CD4-positive, alpha-beta memory T cell (primary cell): ENCODE measurements at regions of chr2 and their contacts with region 1.

Region 1: GRCh38 chr2:98731041-98731893 is at the start of gene MGAT4A:
- DNase-seq: peak; percentile 77 to 86 (median 82)
- H3K4me3 ChIP-seq: peak within 1 kb of the TSS; percentile 67 to 86
- H3K4me3 Mint-ChIP-seq: peak within 1 kb of the TSS; percentile 94 to 97 (median 94)
- H3K27ac ChIP-seq: peak within 1 kb of the TSS; percentile 95
- H3K27ac Mint-ChIP-seq: peak within 1 kb of the TSS; percentile 94 to 98 (median 96)
- H3K4me1 ChIP-seq: peaks cover 72% of the 10 kb centered on the region
- H3K4me1 Mint-ChIP-seq: peaks cover 44 to 80% (median 53%) of the 10 kb centered on the region in 4 donors
- H3K27me3 ChIP-seq: no peaks in the 10 kb centered on the region
- H3K27me3 Mint-ChIP-seq: no peaks in the 10 kb centered on the region
- total RNA-seq, gene MGAT4A: 256 to 270 TPM

Region 2: GRCh38 chr2:98524168-98524567 is 207.1 kb before region 1 on chr2:
- CTCF ChIA-PET with region 1: no interaction called
- POLR2A ChIA-PET with region 1: no interaction called
- intact Hi-C with region 1: no loop called
- DNase-seq: no peak
- H3K4me3 ChIP-seq: no peak overlapping the region
- H3K4me3 Mint-ChIP-seq: no peak overlapping the region
- H3K27ac ChIP-seq: no peak overlapping the region
- H3K27ac Mint-ChIP-seq: peak overlapping the region in 1 of 7 donors; percentile 18
- H3K4me1 ChIP-seq: no peaks in the 10 kb centered on the region
- H3K4me1 Mint-ChIP-seq: peaks cover 7 to 12% (median 11%) of the 10 kb centered on the region in 4 donors
- H3K27me3 ChIP-seq: no peaks in the 10 kb centered on the region
- H3K27me3 Mint-ChIP-seq: no peaks in the 10 kb centered on the region

Region 3: DNA sequence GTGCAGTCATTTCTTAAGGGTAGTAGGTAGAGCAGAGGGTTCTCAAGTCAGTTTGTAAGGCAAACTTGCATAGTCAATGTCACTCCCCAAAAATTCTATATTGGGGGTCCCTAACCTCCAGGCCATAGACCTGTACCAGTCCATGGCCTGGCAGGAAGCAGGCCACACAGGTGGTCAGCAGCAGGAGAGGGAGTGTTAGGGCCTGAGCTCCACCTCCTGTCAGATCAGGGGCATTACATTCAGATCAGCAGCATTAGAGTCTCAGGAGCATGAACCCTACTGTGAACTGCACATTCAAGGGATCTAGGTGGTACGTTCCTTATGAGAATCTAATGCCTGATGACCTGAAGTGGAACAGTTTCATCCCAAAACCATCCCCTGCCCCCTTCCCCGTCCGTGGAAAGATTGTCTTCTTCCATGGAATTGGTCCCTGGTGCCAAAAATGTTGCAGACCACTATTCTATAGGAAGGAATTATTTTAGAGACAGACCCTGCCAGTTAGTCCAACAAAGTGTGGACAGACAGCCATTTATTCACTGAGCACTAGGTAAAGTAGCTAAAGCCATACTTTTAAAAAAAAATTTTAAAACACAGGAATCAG is 129.6 kb before region 1 on chr2:
- CTCF ChIA-PET with region 1: no interaction called
- POLR2A ChIA-PET with region 1: no interaction called
- intact Hi-C with region 1: no loop called
- DNase-seq: no peak
- H3K4me3 ChIP-seq: no peak overlapping the region
- H3K4me3 Mint-ChIP-seq: no peak overlapping the region
- H3K27ac ChIP-seq: no peak overlapping the region
- H3K27ac Mint-ChIP-seq: peak overlapping the region in 5 of 7 donors; percentile 55 to 77 (median 75)
- H3K4me1 ChIP-seq: peaks cover 21% of the 10 kb centered on the region
- H3K4me1 Mint-ChIP-seq: peaks cover 24 to 35% (median 27%) of the 10 kb centered on the region in 4 donors
- H3K27me3 ChIP-seq: no peaks in the 10 kb centered on the region
- H3K27me3 Mint-ChIP-seq: no peaks in the 10 kb centered on the region

Region 4: GRCh38 chr2:98649135-98649991 is 81.9 kb before region 1 on chr2:
- CTCF ChIA-PET with region 1: interaction called, 18 read pairs
- POLR2A ChIA-PET with region 1: interaction called, 292 read pairs
- intact Hi-C with region 1: no loop called
- DNase-seq: peak; percentile 79 to 85 (median 81)
- H3K4me3 ChIP-seq: no peak overlapping the region
- H3K4me3 Mint-ChIP-seq: peak overlapping the region in 5 of 8 donors; percentile 10 to 73 (median 33)
- H3K27ac ChIP-seq: peak overlapping the region; percentile 10
- H3K27ac Mint-ChIP-seq: peak overlapping the region; percentile 66 to 89 (median 84)
- H3K4me1 ChIP-seq: peaks cover 52% of the 10 kb centered on the region
- H3K4me1 Mint-ChIP-seq: peaks cover 45 to 60% (median 54%) of the 10 kb centered on the region in 4 donors
- H3K27me3 ChIP-seq: no peaks in the 10 kb centered on the region
- H3K27me3 Mint-ChIP-seq: no peaks in the 10 kb centered on the region

Region 5: DNA sequence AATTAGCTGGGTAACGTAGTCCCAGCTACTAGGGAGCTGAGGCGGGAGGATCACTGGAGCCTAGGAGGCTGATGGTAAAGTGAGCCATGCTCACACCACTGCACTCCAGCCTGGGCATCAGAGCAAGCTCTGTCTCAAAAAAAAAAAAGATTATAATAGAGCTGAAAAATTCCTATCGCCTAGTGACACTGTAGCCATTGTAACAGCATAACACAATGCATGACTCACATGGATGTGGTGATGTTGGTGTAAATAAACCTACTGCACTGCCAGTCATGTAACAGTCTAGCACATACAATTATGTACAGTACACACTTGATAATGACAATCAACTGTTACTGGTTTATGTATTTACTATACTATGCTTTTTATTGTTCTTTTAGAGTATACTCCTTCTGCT is 40.0 kb before region 1 on chr2:
- CTCF ChIA-PET with region 1: no interaction called
- POLR2A ChIA-PET with region 1: interaction called, 10 read pairs
- intact Hi-C with region 1: loop called (anchors 5 kb)
- DNase-seq: peak in 1 of 5 donors; percentile 57
- H3K4me3 ChIP-seq: no peak overlapping the region
- H3K4me3 Mint-ChIP-seq: peak overlapping the region in 6 of 8 donors; percentile 21 to 60 (median 35)
- H3K27ac ChIP-seq: peak overlapping the region; percentile 8
- H3K27ac Mint-ChIP-seq: peak overlapping the region; percentile 36 to 94 (median 76)
- H3K4me1 ChIP-seq: peaks cover 97% of the 10 kb centered on the region
- H3K4me1 Mint-ChIP-seq: peaks cover 68 to 94% (median 81%) of the 10 kb centered on the region in 4 donors
- H3K27me3 ChIP-seq: no peaks in the 10 kb centered on the region
- H3K27me3 Mint-ChIP-seq: no peaks in the 10 kb centered on the region

Region 6: DNA sequence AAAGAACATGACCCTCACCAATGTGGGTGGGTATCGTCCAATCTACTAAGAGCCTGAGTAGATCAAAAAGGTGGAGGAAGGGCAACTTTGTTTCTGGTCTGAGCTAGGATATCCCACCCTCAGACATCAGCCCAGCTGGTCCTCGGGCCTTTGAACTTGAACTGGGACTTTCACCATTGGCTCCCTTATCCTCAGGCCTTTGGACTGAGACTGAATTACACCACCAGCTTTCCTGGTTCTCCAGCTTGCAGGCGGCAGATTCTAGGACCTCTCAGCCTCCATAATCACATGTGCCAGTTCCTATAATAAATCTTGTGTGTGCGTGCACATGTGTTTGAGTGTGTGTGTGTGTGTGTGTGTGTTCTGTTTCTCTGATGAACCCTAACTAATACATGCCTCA is 11.0 kb before region 1 on chr2:
- CTCF ChIA-PET with region 1: interaction called, 14 read pairs
- POLR2A ChIA-PET with region 1: interaction called, 34 read pairs
- intact Hi-C with region 1: loop called (anchors 1 kb)
- DNase-seq: no peak
- H3K4me3 ChIP-seq: no peak overlapping the region
- H3K4me3 Mint-ChIP-seq: peak overlapping the region in 4 of 8 donors; percentile 2 to 56 (median 36)
- H3K27ac ChIP-seq: peak overlapping the region; percentile 4
- H3K27ac Mint-ChIP-seq: peak overlapping the region in 6 of 7 donors; percentile 18 to 92 (median 76)
- H3K4me1 ChIP-seq: peaks cover 92% of the 10 kb centered on the region
- H3K4me1 Mint-ChIP-seq: peaks cover 73 to 91% (median 80%) of the 10 kb centered on the region in 4 donors
- H3K27me3 ChIP-seq: no peaks in the 10 kb centered on the region
- H3K27me3 Mint-ChIP-seq: no peaks in the 10 kb centered on the region

Region 7: DNA sequence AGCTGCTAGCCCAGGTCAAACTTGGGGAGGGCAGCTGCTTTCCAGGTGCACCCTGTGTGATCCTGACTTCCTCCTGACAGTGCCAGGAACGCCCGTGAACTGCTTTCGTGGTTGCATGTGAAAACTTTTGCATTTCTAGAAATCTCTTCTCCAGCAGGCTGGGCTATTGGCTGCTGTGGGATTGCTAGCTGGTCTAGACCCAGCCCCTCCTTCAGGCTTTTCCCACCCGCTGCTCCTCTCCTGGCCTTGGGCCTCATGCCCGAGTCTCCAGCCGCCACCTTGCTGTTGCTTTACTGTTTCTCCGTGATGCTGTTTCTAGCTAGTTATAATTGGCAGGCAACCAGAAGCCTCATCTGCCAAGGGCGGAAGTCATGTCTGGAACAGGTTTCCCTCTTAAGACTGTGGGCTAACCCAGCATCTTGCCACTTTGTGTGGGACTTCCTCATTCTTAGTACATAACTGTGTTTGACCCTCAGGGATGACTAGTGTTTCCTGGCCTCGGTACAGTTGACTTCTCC is 26.7 kb after region 1 on chr2:
- CTCF ChIA-PET with region 1: interaction called, 24 read pairs
- POLR2A ChIA-PET with region 1: interaction called, 565 read pairs
- intact Hi-C with region 1: loop called (anchors 1 kb)
- DNase-seq: peak; percentile 68 to 87 (median 71)
- H3K4me3 ChIP-seq: peak overlapping the region in 1 of 2 donors; percentile 37
- H3K4me3 Mint-ChIP-seq: peak overlapping the region; percentile 68 to 95 (median 84)
- H3K27ac ChIP-seq: peak overlapping the region; percentile 68
- H3K27ac Mint-ChIP-seq: peak overlapping the region; percentile 93 to 99 (median 97)
- H3K4me1 ChIP-seq: peaks cover 69% of the 10 kb centered on the region
- H3K4me1 Mint-ChIP-seq: peaks cover 57 to 86% (median 71%) of the 10 kb centered on the region in 4 donors
- H3K27me3 ChIP-seq: no peaks in the 10 kb centered on the region
- H3K27me3 Mint-ChIP-seq: no peaks in the 10 kb centered on the region

Region 8: GRCh38 chr2:98835831-98836385 is 104.6 kb after region 1 on chr2:
- CTCF ChIA-PET with region 1: interaction called, 5 read pairs
- POLR2A ChIA-PET with region 1: interaction called, 209 read pairs
- intact Hi-C with region 1: loop called (anchors 1 kb)
- DNase-seq: peak; percentile 66 to 88 (median 79)
- H3K4me3 ChIP-seq: peak overlapping the region in 1 of 2 donors; percentile 22
- H3K4me3 Mint-ChIP-seq: peak overlapping the region; percentile 43 to 77 (median 64)
- H3K27ac ChIP-seq: peak overlapping the region; percentile 54
- H3K27ac Mint-ChIP-seq: peak overlapping the region; percentile 88 to 99 (median 97)
- H3K4me1 ChIP-seq: peaks cover 40% of the 10 kb centered on the region
- H3K4me1 Mint-ChIP-seq: peaks cover 36 to 53% (median 44%) of the 10 kb centered on the region in 4 donors
- H3K27me3 ChIP-seq: no peaks in the 10 kb centered on the region
- H3K27me3 Mint-ChIP-seq: no peaks in the 10 kb centered on the region

Region 9: DNA sequence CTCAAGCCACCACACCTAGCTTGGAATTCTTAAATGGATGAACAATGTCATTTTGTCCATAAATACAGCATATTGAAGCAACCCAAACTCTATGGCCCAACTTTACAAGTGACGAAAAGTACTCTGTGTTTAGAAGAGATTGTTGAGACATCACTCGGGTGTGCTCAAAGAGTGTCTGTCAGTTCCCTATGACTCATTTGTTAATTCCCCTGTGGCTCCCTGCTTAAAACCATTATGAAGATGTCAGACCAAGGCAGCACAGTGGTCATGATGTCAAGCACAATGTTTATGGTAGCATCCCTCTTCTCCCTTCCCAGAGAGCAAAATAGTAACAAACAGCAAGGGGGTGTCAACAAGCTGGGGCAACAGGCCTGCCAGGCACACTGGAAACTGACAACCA is 566.7 kb after region 1 on chr2:
- CTCF ChIA-PET with region 1: no interaction called
- POLR2A ChIA-PET with region 1: no interaction called
- intact Hi-C with region 1: no loop called
- DNase-seq: no peak
- H3K4me3 ChIP-seq: no peak overlapping the region
- H3K4me3 Mint-ChIP-seq: no peak overlapping the region
- H3K27ac ChIP-seq: no peak overlapping the region
- H3K27ac Mint-ChIP-seq: no peak overlapping the region
- H3K4me1 ChIP-seq: no peaks in the 10 kb centered on the region
- H3K4me1 Mint-ChIP-seq: no peaks in the 10 kb centered on the region
- H3K27me3 ChIP-seq: no peaks in the 10 kb centered on the region
- H3K27me3 Mint-ChIP-seq: no peaks in the 10 kb centered on the region

Region 10: DNA sequence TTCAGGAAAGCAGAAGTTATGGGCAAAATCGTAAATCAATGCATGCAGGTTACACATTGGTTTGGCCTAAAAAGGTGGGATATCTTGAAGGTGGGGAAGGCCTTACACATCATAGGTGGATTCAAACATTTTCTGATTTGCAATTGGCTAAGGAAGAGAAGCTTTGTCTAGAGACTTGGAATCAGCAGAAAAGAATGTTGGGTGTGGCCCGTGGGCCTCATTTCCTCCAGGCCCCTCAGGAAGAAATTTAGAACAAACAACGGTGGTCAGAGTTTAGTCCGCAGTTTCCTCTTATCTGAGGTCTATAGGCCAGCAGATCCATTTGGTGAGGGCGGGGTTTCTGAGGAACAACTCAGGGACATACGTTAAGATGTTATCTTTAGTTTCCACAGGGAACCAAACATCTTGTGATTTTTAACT is 1462.0 kb after region 1 on chr2:
- CTCF ChIA-PET with region 1: no interaction called
- POLR2A ChIA-PET with region 1: no interaction called
- intact Hi-C with region 1: no loop called
- DNase-seq: no peak
- H3K4me3 ChIP-seq: no peak overlapping the region
- H3K4me3 Mint-ChIP-seq: no peak overlapping the region
- H3K27ac ChIP-seq: no peak overlapping the region
- H3K27ac Mint-ChIP-seq: no peak overlapping the region
- H3K4me1 ChIP-seq: no peaks in the 10 kb centered on the region
- H3K4me1 Mint-ChIP-seq: no peaks in the 10 kb centered on the region
- H3K27me3 ChIP-seq: no peaks in the 10 kb centered on the region
- H3K27me3 Mint-ChIP-seq: peaks cover 0 to 6% of the 10 kb centered on the region in 2 donors